Activated CD8-positive, alpha-beta memory T cell treated with anti-CD3 and anti-CD28 coated beads, Interleukin-2, amount 10 ng/mL, durations not matched to agents 7 days and 5 days (primary cell): ENCODE measurements at regions of chr2 and their contacts with region 1.

Region 1: GRCh38 chr2:170324640-170325046 is 146.7 kb downstream of the MYO3B start:
- DNase-seq: peak; percentile 57
- ATAC-seq: no peak
- H3K4me3 Mint-ChIP-seq: no peak overlapping the region
- H3K27ac Mint-ChIP-seq: no peak overlapping the region
- H3K4me1 Mint-ChIP-seq: no peaks in the 10 kb centered on the region
- H3K27me3 Mint-ChIP-seq: peaks cover 2% of the 10 kb centered on the region

Region 2: GRCh38 chr2:170361090-170361936 is 36.7 kb after region 1 on chr2:
- CTCF ChIA-PET with region 1: interaction called, 18 read pairs
- DNase-seq: peak; percentile 77
- ATAC-seq: peak; percentile 69
- H3K4me3 Mint-ChIP-seq: peak overlapping the region; percentile 45
- H3K27ac Mint-ChIP-seq: peak overlapping the region; percentile 69
- H3K4me1 Mint-ChIP-seq: peaks cover 29% of the 10 kb centered on the region
- H3K27me3 Mint-ChIP-seq: peaks cover 8% of the 10 kb centered on the region

Region 3: DNA sequence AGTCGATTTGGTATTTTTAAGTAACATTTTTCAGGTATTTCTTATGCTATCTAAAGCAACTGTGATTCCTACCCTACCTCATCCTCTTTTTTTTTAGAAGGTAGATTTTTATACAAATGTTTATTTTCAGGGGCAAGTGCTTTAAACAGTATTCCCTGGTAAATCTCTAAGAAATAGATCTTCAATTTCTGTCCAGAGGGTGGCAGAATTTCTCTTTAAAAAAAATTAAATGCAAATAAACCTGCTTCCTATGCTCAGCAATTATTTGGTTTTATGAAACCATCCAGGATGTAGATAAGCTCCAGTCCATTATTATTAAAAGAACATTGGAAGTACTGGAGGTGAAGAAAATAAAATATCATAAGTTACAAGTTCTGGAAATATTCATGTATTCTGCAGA is 45.3 kb after region 1 on chr2:
- CTCF ChIA-PET with region 1: interaction called, 12 read pairs
- DNase-seq: no peak
- ATAC-seq: no peak
- H3K4me3 Mint-ChIP-seq: no peak overlapping the region
- H3K27ac Mint-ChIP-seq: no peak overlapping the region
- H3K4me1 Mint-ChIP-seq: peaks cover 44% of the 10 kb centered on the region
- H3K27me3 Mint-ChIP-seq: peaks cover 14% of the 10 kb centered on the region

Region 4: GRCh38 chr2:170377500-170378207 is 53.0 kb after region 1 on chr2:
- CTCF ChIA-PET with region 1: interaction called, 11 read pairs
- DNase-seq: no peak
- ATAC-seq: no peak
- H3K4me3 Mint-ChIP-seq: no peak overlapping the region
- H3K27ac Mint-ChIP-seq: no peak overlapping the region
- H3K4me1 Mint-ChIP-seq: peaks cover 6% of the 10 kb centered on the region
- H3K27me3 Mint-ChIP-seq: peaks cover 20% of the 10 kb centered on the region